ENCODE measurements at regions of chr2 and their contacts with region 1.

Region 1: GRCh38 chr2:203873921-203874631 is 6.5 kb downstream of the CTLA4 start:
- DNase-seq: peak in 2 of 9 experiments; percentile 24 to 50
- ATAC-seq: no peak
- H3K4me3 ChIP-seq: no peak overlapping the region
- H3K4me3 Mint-ChIP-seq: no peak overlapping the region
- H3K27ac ChIP-seq: no peak overlapping the region
- H3K27ac Mint-ChIP-seq: peak overlapping the region; percentile 13
- H3K4me1 ChIP-seq: peaks cover 46% of the 10 kb centered on the region
- H3K4me1 Mint-ChIP-seq: peaks cover 60% of the 10 kb centered on the region
- H3K27me3 ChIP-seq: no peaks in the 10 kb centered on the region
- H3K27me3 Mint-ChIP-seq: no peaks in the 10 kb centered on the region
- CTCF ChIP-seq: no peak

Region 2: DNA sequence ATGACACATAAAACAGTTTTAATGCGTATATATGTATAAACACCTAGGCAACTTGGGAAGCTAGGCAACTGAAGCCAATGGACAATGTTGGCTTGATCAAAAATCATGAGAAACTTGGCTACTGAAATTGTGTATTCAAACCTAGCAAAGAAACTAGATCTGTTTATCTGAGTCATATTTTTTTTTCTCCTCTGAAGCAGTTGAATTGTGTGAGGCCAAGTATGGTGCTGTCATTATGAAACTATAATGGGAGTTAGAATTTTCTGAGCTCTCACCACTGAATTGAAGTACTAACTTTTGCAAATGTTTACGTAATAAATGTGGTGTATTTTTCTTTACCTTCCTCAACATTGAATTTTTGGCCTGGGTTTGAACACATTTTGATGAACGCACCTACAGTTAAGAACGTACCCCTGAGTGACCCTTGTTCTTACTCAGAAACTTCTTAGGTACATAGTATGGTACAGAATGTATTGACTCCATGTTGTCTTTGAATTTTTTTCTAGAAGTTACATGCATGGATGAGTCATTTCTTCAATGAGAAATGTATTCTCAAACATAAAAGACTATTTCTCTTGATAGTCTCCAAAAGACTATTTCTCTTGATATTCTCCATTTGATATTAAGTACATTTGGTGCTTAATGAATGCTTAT is 143.9 kb before region 1 on chr2:
- CTCF ChIA-PET with region 1: no interaction called
- POLR2A ChIA-PET with region 1: no interaction called
- intact Hi-C with region 1: no loop called
- DNase-seq: no peak
- ATAC-seq: peak; percentile 43
- H3K4me3 ChIP-seq: no peak overlapping the region
- H3K4me3 Mint-ChIP-seq: peak overlapping the region; percentile 42
- H3K27ac ChIP-seq: no peak overlapping the region
- H3K27ac Mint-ChIP-seq: peak overlapping the region; percentile 63
- H3K4me1 ChIP-seq: peaks cover 58% of the 10 kb centered on the region
- H3K4me1 Mint-ChIP-seq: peaks cover 88% of the 10 kb centered on the region
- H3K27me3 ChIP-seq: no peaks in the 10 kb centered on the region
- H3K27me3 Mint-ChIP-seq: no peaks in the 10 kb centered on the region
- CTCF ChIP-seq: no peak

Region 3: DNA sequence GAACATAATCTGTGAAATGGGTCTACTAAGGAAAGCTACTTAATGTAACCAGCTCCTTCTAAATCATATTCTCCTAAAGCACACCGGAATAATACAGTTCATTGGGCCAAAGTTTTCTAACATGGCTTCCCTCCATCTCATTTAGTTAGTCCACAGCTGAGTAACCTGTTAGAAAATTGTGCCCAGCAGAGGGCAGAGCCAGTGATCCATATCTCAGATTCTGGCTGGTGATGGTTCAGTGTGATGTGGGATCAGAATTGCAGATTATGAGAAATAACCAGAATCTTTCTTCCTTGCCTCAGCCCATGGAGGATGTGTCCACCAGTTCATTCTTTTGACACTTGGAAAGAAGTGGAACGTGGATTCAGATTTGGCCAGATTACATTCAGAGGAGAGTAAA is 15.9 kb before region 1 on chr2:
- CTCF ChIA-PET with region 1: interaction called, 10 read pairs
- POLR2A ChIA-PET with region 1: interaction called, 9 read pairs
- intact Hi-C with region 1: no loop called
- DNase-seq: peak in 3 of 9 experiments; percentile 22 to 48 (median 38)
- ATAC-seq: no peak
- H3K4me3 ChIP-seq: no peak overlapping the region
- H3K4me3 Mint-ChIP-seq: no peak overlapping the region
- H3K27ac ChIP-seq: no peak overlapping the region
- H3K27ac Mint-ChIP-seq: no peak overlapping the region
- H3K4me1 ChIP-seq: no peaks in the 10 kb centered on the region
- H3K4me1 Mint-ChIP-seq: peaks cover 31% of the 10 kb centered on the region
- H3K27me3 ChIP-seq: no peaks in the 10 kb centered on the region
- H3K27me3 Mint-ChIP-seq: no peaks in the 10 kb centered on the region
- CTCF ChIP-seq: peak; percentile 39